Activated CD8-positive, alpha-beta T cell treated with anti-CD3 and anti-CD28 coated beads for 36 hours (primary cell): ENCODE measurements at regions of chr12 and their contacts with region 1.

Region 1: DNA sequence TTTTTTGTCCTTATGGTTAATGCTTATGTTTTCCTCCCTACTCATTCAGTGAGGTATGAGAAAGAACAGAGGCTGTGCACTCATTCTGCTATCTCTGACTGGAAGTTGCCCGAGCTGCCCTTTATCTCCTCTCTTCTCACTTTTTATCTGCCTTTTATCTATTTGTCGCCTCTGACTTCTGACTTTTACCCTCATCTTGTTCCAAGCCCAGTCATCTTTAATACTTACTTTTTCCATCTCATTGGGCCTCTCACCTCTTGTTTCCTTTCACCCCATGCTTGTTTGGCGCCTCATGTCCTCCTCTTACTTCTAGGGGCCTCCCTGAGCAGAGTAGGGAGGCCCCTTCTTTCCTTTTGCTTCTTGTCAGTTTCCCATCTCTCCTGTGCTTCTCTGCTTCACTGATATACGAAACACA is 50.7 kb downstream of the DIP2B start:
- DNase-seq: peak; percentile 66
- ATAC-seq: peak; percentile 88
- H3K4me3 Mint-ChIP-seq: peak overlapping the region; percentile 64
- H3K27ac Mint-ChIP-seq: peak overlapping the region; percentile 98
- H3K4me1 Mint-ChIP-seq: peaks cover 60% of the 10 kb centered on the region
- H3K27me3 Mint-ChIP-seq: no peaks in the 10 kb centered on the region
- CTCF ChIP-seq: no peak

Region 2: DNA sequence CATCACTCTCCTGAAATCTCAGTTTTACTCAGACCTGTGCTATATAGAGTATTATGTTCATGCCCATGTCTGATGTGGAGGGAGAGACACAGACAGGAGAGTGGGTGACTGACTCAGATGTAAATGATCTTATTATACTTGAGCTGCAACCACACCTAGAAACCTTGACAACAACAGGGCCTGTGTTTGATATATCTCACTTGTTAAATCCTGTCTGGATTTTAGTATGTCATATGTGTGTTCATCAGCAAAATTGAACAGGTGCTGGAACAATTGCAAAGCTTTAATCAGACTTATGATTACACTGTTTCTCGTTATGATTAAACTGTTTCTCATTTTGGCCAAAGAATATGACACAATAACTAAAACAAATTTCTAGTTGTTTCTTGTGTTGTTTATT is 13.0 kb before region 1 on chr12:
- CTCF ChIA-PET with region 1: interaction called, 10 read pairs
- POLR2A ChIA-PET with region 1: interaction called, 5 read pairs
- intact Hi-C with region 1: no loop called
- DNase-seq: peak; percentile 58
- ATAC-seq: peak; percentile 98
- H3K4me3 Mint-ChIP-seq: no peak overlapping the region
- H3K27ac Mint-ChIP-seq: peak overlapping the region; percentile 82
- H3K4me1 Mint-ChIP-seq: peaks cover 46% of the 10 kb centered on the region
- H3K27me3 Mint-ChIP-seq: no peaks in the 10 kb centered on the region
- CTCF ChIP-seq: no peak

Region 3: GRCh38 chr12:50620109-50620977 is 64.9 kb after region 1 on chr12:
- CTCF ChIA-PET with region 1: no interaction called
- POLR2A ChIA-PET with region 1: interaction called, 3 read pairs
- intact Hi-C with region 1: loop called (anchors 5 kb)
- DNase-seq: peak; percentile 60
- ATAC-seq: peak; percentile 73
- H3K4me3 Mint-ChIP-seq: no peak overlapping the region
- H3K27ac Mint-ChIP-seq: peak overlapping the region; percentile 66
- H3K4me1 Mint-ChIP-seq: peaks cover 61% of the 10 kb centered on the region
- H3K27me3 Mint-ChIP-seq: no peaks in the 10 kb centered on the region
- CTCF ChIP-seq: no peak